ENCODE measurements at regions of chr6 and their contacts with region 1.

Region 1: GRCh38 chr6:145929037-145929633 is 35.0 kb downstream of the SHPRH start:
- DNase-seq: no peak
- ATAC-seq: no peak
- H3K4me3 ChIP-seq: no peak overlapping the region
- H3K27ac ChIP-seq: no peak overlapping the region
- H3K4me1 ChIP-seq: no peaks in the 10 kb centered on the region
- H3K27me3 ChIP-seq: no peaks in the 10 kb centered on the region
- CTCF ChIP-seq: peak; percentile 47 to 60 (median 52); a peak in 4 of 6 replicates
- EP300 ChIP-seq: no peak
- POLR2A ChIP-seq: no peak
- RAD21 ChIP-seq: peak; percentile 58

Region 2: GRCh38 chr6:145906144-145906543 is 23.0 kb before region 1 on chr6:
- CTCF ChIA-PET with region 1: interaction called, 18 read pairs
- POLR2A ChIA-PET with region 1: no interaction called
- RAD21 ChIA-PET with region 1: no interaction called
- SMC1A ChIA-PET with region 1: no interaction called
- in situ Hi-C with region 1: no loop called
- intact Hi-C with region 1: no loop called
- DNase-seq: no peak
- ATAC-seq: no peak
- H3K4me3 ChIP-seq: no peak overlapping the region
- H3K27ac ChIP-seq: no peak overlapping the region
- H3K4me1 ChIP-seq: peaks cover 4% of the 10 kb centered on the region
- H3K27me3 ChIP-seq: no peaks in the 10 kb centered on the region
- CTCF ChIP-seq: no peak
- EP300 ChIP-seq: no peak
- POLR2A ChIP-seq: no peak
- RAD21 ChIP-seq: no peak

Region 3: DNA sequence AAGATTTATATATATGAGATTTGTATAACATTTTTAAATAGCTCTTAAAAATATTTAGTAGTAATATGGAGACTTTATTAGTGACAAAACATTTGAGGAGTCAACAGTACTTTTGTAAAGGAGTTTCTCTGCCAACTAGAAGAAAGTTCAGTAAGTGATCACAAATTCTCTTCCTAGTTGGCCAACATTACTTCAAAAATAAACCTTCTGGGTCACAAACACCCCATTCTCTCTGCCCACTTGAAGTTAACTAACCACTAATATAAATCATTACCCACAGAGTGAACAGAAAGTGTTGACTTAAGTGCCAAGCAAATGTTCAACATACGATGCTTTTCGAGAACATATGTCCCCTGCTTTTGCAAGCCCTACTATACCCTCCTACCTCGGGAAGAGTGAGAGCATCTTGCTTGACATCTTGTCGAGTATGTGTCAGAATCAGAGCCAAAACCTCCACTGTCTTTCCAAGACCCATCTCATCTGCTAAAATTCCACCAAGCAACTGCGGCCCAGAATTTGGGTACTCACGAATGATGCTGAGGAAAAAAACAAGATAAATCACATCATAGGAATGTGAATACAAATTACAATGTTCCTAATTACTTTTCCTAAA is 18.1 kb after region 1 on chr6:
- CTCF ChIA-PET with region 1: interaction called, 19 read pairs
- POLR2A ChIA-PET with region 1: no interaction called
- RAD21 ChIA-PET with region 1: interaction called, 4 read pairs
- SMC1A ChIA-PET with region 1: interaction called, 3 read pairs
- in situ Hi-C with region 1: no loop called
- intact Hi-C with region 1: no loop called
- DNase-seq: no peak
- ATAC-seq: no peak
- H3K4me3 ChIP-seq: no peak overlapping the region
- H3K27ac ChIP-seq: no peak overlapping the region
- H3K4me1 ChIP-seq: no peaks in the 10 kb centered on the region
- H3K27me3 ChIP-seq: no peaks in the 10 kb centered on the region
- CTCF ChIP-seq: no peak
- EP300 ChIP-seq: no peak
- POLR2A ChIP-seq: no peak
- RAD21 ChIP-seq: no peak

Region 4: GRCh38 chr6:146050168-146050567 is 121.0 kb after region 1 on chr6:
- CTCF ChIA-PET with region 1: no interaction called
- POLR2A ChIA-PET with region 1: no interaction called
- RAD21 ChIA-PET with region 1: no interaction called
- SMC1A ChIA-PET with region 1: interaction called, 3 read pairs
- in situ Hi-C with region 1: no loop called
- intact Hi-C with region 1: loop called (anchors 5 kb)
- DNase-seq: no peak
- ATAC-seq: no peak
- H3K4me3 ChIP-seq: no peak overlapping the region
- H3K27ac ChIP-seq: no peak overlapping the region
- H3K4me1 ChIP-seq: no peaks in the 10 kb centered on the region
- H3K27me3 ChIP-seq: no peaks in the 10 kb centered on the region; a peak in 1 of 4 replicates
- CTCF ChIP-seq: no peak
- EP300 ChIP-seq: no peak
- POLR2A ChIP-seq: no peak
- RAD21 ChIP-seq: no peak

Region 5: GRCh38 chr6:146700078-146700686 is 771.0 kb after region 1 on chr6:
- CTCF ChIA-PET with region 1: interaction called, 35 read pairs
- POLR2A ChIA-PET with region 1: no interaction called
- RAD21 ChIA-PET with region 1: interaction called, 21 read pairs
- SMC1A ChIA-PET with region 1: interaction called, 6 read pairs
- in situ Hi-C with region 1: loop called (anchors 10 kb)
- intact Hi-C with region 1: loop called (anchors 2 kb)
- DNase-seq: peak; percentile 26
- ATAC-seq: peak; percentile 71; the same call in 2 of the 3 replicates
- H3K4me3 ChIP-seq: no peak overlapping the region
- H3K27ac ChIP-seq: no peak overlapping the region
- H3K4me1 ChIP-seq: no peaks in the 10 kb centered on the region
- H3K27me3 ChIP-seq: no peaks in the 10 kb centered on the region
- CTCF ChIP-seq: peak; percentile 62 to 68 (median 67); a peak in 5 of 6 replicates
- EP300 ChIP-seq: no peak
- POLR2A ChIP-seq: no peak
- RAD21 ChIP-seq: peak; percentile 78